CD8-positive, alpha-beta T cell (primary cell): ENCODE measurements at regions of chr13 and their contacts with region 1.

Region 1: DNA sequence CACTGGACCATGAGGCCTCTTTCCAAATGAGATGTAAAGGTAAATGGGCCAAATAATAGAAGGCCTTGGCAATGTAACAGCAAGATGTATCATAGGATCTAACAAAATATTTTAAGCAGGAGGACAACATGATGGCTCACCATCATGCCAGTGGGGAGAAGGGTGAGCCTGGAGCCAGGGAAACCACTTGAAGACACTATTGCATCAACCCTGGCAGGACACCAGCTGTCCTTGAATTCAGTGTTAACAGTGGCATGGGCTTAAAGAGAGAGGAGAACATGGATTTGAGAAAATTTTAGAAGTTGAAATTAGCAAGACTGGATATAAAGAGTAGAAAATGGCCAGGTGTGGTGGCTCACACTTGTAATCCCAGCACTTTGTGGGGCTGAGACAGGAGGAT is 6.7 kb upstream of the RCBTB2 start:
- DNase-seq: no peak
- ATAC-seq: no peak
- H3K4me3 ChIP-seq: no peak overlapping the region
- H3K4me3 Mint-ChIP-seq: no peak overlapping the region
- H3K27ac ChIP-seq: no peak overlapping the region
- H3K27ac Mint-ChIP-seq: no peak overlapping the region
- H3K4me1 ChIP-seq: no peaks in the 10 kb centered on the region
- H3K4me1 Mint-ChIP-seq: no peaks in the 10 kb centered on the region
- H3K27me3 ChIP-seq: no peaks in the 10 kb centered on the region
- H3K27me3 Mint-ChIP-seq: no peaks in the 10 kb centered on the region
- CTCF ChIP-seq: no peak

Region 2: GRCh38 chr13:48000778-48001628 is 538.5 kb before region 1 on chr13 and contains the start of gene SUCLA2:
- CTCF ChIA-PET with region 1: no interaction called
- POLR2A ChIA-PET with region 1: no interaction called
- intact Hi-C with region 1: loop called in 1 of 2 experiments (anchors 5 kb)
- DNase-seq: peak; percentile 77 to 93 (median 88)
- ATAC-seq: peak; percentile 100
- H3K4me3 ChIP-seq: peak within 1 kb of the TSS; percentile 99
- H3K4me3 Mint-ChIP-seq: peak within 1 kb of the TSS; percentile 95
- H3K27ac ChIP-seq: peak within 1 kb of the TSS; percentile 72 to 81
- H3K27ac Mint-ChIP-seq: peak within 1 kb of the TSS; percentile 91
- H3K4me1 ChIP-seq: peaks cover 16% of the 10 kb centered on the region
- H3K4me1 Mint-ChIP-seq: peaks cover 35% of the 10 kb centered on the region
- H3K27me3 ChIP-seq: no peaks in the 10 kb centered on the region
- H3K27me3 Mint-ChIP-seq: no peaks in the 10 kb centered on the region
- CTCF ChIP-seq: no peak
- total RNA-seq, gene SUCLA2: 20.8 to 22.9 TPM